CD4-positive, alpha-beta T cell (primary cell): ENCODE measurements at regions of chr6 and their contacts with region 1.

Region 1: DNA sequence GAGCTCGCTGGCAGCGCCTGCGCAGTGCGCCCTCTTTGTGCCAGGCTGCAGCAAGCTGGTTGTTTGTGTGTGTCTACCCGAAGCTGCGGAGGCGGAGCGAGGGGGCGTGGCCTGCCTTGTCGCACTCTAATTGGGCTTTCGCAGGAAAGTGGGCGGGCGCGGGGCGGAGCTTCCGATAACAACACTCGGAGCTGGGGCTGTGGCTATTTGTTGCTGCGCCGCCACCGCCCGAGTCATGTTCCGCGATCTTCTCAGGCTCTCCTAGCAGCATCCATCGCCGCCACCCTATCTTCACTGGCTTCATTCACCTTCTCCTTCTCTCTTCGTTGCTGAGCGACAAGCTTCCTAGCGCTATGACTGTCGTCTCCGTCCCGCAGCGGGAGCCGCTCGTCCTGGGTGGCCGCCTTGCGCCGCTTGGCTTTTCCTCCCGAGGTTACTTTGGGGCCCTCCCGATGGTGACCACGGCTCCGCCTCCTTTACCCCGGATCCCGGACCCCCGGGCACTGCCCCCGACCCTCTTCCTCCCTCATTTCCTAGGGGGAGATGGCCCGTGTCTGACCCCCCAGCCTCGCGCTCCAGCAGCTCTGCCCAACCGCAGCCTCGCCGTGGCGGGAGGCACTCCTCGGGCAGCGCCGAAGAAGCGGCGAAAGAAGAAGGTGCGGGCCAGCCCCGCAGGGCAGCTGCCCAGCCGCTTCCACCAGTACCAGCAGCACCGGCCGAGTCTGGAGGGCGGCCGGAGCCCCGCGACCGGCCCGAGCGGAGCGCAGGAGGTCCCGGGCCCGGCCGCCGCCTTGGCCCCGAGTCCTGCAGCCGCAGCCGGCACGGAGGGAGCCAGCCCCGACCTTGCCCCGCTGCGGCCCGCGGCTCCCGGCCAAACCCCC is at the start of gene PNRC1:
- DNase-seq: peak; percentile 100
- ATAC-seq: peak; percentile 72
- H3K4me3 ChIP-seq: peak within 1 kb of the TSS; percentile 96
- H3K4me3 Mint-ChIP-seq: peak within 1 kb of the TSS; percentile 95
- H3K27ac ChIP-seq: peak within 1 kb of the TSS; percentile 99 to 100
- H3K27ac Mint-ChIP-seq: peak within 1 kb of the TSS; percentile 97
- H3K4me1 ChIP-seq: peaks cover 31% of the 10 kb centered on the region
- H3K4me1 Mint-ChIP-seq: peaks cover 46% of the 10 kb centered on the region
- H3K27me3 ChIP-seq: no peaks in the 10 kb centered on the region
- H3K27me3 Mint-ChIP-seq: peaks cover 5% of the 10 kb centered on the region
- CTCF ChIP-seq: no peak
- total RNA-seq, gene PNRC1: 974 to 1,023 TPM

Region 2: DNA sequence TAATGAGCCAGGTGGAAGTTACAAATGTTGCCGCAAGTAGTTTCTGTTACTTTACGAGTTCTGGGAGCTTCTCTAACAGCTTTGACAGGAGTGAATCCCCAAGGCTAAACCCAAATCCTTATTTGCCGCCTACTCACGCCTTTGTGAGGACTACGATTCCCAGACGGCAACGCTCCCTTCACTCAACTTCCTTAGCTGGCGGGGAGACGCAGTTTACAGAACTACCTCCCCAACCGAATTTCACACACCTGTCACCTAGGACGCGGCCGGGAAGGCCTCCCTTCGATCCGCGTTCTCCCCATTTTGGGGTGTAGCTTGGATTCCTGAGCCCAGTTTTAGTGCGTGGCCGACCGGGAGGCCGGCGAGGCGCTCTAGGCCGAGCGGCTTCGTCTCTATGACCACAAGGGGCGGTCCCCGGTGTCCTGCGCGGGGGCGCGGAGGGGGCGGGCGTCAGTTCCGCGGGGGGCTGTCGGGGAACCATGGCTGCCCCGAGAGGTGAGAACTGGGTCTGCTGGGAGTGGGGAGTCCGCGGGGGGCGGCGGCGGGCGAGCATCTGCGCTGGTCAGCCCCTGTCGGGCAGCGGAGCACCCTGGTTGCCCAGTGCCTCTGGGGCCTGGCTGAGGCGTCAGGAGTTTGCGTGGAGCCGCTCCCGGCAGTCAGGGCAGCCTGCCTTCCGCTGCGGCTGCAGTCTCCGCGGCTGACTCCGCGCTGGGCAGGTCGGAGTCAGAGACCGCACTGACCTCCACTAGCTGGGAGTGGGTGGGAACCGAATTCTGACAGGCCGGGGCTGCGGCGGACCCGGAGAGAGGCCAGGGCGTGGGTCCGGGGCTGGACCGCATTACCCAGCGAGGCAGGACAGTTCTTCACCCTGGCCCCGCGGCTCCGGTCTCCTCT is 1608.0 kb before region 1 on chr6 and contains the start of gene SLC35A1:
- CTCF ChIA-PET with region 1: no interaction called
- POLR2A ChIA-PET with region 1: no interaction called
- intact Hi-C with region 1: loop called in 1 of 2 experiments (anchors 5 kb)
- DNase-seq: peak; percentile 74 to 90 (median 80)
- ATAC-seq: peak; percentile 89
- H3K4me3 ChIP-seq: peak within 1 kb of the TSS; percentile 92
- H3K4me3 Mint-ChIP-seq: peak within 1 kb of the TSS; percentile 92
- H3K27ac ChIP-seq: peak within 1 kb of the TSS; percentile 77 to 97
- H3K27ac Mint-ChIP-seq: peak within 1 kb of the TSS; percentile 93
- H3K4me1 ChIP-seq: peaks cover 13% of the 10 kb centered on the region
- H3K4me1 Mint-ChIP-seq: peaks cover 28% of the 10 kb centered on the region
- H3K27me3 ChIP-seq: no peaks in the 10 kb centered on the region
- H3K27me3 Mint-ChIP-seq: peaks cover 3% of the 10 kb centered on the region
- CTCF ChIP-seq: no peak
- total RNA-seq, gene SLC35A1: 3.8 to 4.9 TPM

Region 3: GRCh38 chr6:88472851-88473525 is 607.8 kb before region 1 on chr6:
- CTCF ChIA-PET with region 1: no interaction called
- POLR2A ChIA-PET with region 1: no interaction called
- intact Hi-C with region 1: no loop called
- DNase-seq: no peak
- ATAC-seq: no peak
- H3K4me3 ChIP-seq: no peak overlapping the region
- H3K4me3 Mint-ChIP-seq: no peak overlapping the region
- H3K27ac ChIP-seq: no peak overlapping the region
- H3K27ac Mint-ChIP-seq: no peak overlapping the region
- H3K4me1 ChIP-seq: no peaks in the 10 kb centered on the region
- H3K4me1 Mint-ChIP-seq: no peaks in the 10 kb centered on the region
- H3K27me3 ChIP-seq: no peaks in the 10 kb centered on the region
- H3K27me3 Mint-ChIP-seq: peaks cover 15% of the 10 kb centered on the region
- CTCF ChIP-seq: no peak

Region 4: GRCh38 chr6:88982720-88983119 is 98.1 kb before region 1 on chr6:
- CTCF ChIA-PET with region 1: interaction called, 9 read pairs
- POLR2A ChIA-PET with region 1: interaction called, 71 read pairs
- intact Hi-C with region 1: loop called in 1 of 2 experiments (anchors 5 kb)
- DNase-seq: peak in 4 of 14 experiments; percentile 24 to 79 (median 75)
- ATAC-seq: peak; percentile 89
- H3K4me3 ChIP-seq: no peak overlapping the region
- H3K4me3 Mint-ChIP-seq: no peak overlapping the region
- H3K27ac ChIP-seq: no peak overlapping the region
- H3K27ac Mint-ChIP-seq: no peak overlapping the region
- H3K4me1 ChIP-seq: no peaks in the 10 kb centered on the region
- H3K4me1 Mint-ChIP-seq: no peaks in the 10 kb centered on the region
- H3K27me3 ChIP-seq: no peaks in the 10 kb centered on the region
- H3K27me3 Mint-ChIP-seq: no peaks in the 10 kb centered on the region
- CTCF ChIP-seq: peak; percentile 82

Region 5: DNA sequence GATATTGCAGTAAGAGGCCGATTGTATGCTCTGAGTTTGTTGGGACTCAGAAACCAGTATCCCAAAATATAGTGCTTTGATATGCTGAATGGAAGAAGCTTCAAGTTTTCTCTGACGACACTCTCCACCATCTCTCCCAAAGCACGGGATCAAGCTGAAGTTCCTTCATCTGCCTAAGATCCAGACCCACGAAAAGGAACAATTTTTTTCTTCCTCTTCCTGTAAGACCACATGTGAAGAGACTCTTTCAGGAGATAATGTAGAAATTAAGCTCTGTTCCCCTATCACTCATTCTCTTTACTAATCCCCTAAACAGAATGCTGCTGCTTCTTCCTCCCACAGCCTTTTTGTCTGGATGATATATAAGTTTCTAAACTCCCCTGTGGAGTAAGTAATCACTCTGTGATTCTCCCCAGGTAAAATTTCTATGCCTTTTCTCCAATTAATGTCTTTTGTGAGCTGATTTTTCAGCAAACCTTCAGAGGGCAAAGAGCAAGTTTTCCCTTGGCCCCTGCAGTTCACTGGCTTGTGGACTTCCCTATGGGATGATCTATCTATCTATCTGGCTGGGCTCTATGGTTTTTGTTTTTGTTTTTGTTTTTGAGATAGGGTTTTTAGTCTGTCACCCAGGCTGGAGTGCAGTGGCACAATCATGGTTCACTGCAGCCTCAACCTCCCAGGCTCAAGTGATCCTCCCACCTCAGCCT is 13.7 kb before region 1 on chr6:
- CTCF ChIA-PET with region 1: interaction called, 3 read pairs
- POLR2A ChIA-PET with region 1: interaction called, 24 read pairs
- intact Hi-C with region 1: no loop called
- DNase-seq: no peak
- ATAC-seq: no peak
- H3K4me3 ChIP-seq: no peak overlapping the region
- H3K4me3 Mint-ChIP-seq: no peak overlapping the region
- H3K27ac ChIP-seq: no peak overlapping the region
- H3K27ac Mint-ChIP-seq: no peak overlapping the region
- H3K4me1 ChIP-seq: no peaks in the 10 kb centered on the region
- H3K4me1 Mint-ChIP-seq: no peaks in the 10 kb centered on the region
- H3K27me3 ChIP-seq: no peaks in the 10 kb centered on the region
- H3K27me3 Mint-ChIP-seq: no peaks in the 10 kb centered on the region
- CTCF ChIP-seq: no peak

Region 6: DNA sequence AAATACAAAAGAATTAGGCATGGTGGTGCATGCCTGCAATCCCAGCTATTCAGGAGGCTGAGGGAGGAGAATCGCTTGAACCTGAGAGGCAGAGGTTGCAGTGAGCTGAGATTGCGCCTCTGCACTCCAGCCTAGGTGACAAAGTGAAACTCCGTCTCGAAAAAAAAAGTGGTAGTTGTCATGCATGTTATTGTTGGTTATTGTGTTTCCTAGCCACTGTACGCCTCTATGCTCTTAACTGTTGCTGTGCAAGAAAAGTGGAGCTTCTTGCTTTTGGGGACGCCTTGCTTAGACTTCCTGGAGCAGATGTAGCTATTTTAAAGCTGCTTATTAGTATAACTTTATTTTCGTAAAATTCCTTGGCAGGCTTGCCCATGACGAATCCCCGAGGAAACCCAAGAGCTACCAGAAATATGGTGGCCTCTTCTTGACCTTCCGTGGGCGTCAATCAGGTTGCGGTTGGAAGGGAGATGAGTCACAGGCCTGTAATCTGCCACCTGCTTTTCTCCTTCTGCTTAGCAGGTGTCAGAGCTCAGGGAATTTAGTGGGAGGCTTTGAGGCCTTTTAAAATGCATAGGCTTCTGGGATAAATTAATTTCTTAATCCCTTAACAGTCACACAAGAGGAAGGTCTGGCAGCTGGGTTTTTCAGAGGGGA is 217.0 kb after region 1 on chr6:
- CTCF ChIA-PET with region 1: interaction called, 3 read pairs
- POLR2A ChIA-PET with region 1: interaction called, 32 read pairs
- intact Hi-C with region 1: loop called in 1 of 2 experiments (anchors 2 kb)
- DNase-seq: peak in 13 of 14 experiments; percentile 36 to 85 (median 46)
- ATAC-seq: peak; percentile 69
- H3K4me3 ChIP-seq: no peak overlapping the region
- H3K4me3 Mint-ChIP-seq: peak overlapping the region; percentile 50
- H3K27ac ChIP-seq: peak overlapping the region in 1 of 2 donors; percentile 64
- H3K27ac Mint-ChIP-seq: peak overlapping the region; percentile 86
- H3K4me1 ChIP-seq: peaks cover 28% of the 10 kb centered on the region
- H3K4me1 Mint-ChIP-seq: peaks cover 26% of the 10 kb centered on the region
- H3K27me3 ChIP-seq: no peaks in the 10 kb centered on the region
- H3K27me3 Mint-ChIP-seq: no peaks in the 10 kb centered on the region
- CTCF ChIP-seq: no peak

Region 7: DNA sequence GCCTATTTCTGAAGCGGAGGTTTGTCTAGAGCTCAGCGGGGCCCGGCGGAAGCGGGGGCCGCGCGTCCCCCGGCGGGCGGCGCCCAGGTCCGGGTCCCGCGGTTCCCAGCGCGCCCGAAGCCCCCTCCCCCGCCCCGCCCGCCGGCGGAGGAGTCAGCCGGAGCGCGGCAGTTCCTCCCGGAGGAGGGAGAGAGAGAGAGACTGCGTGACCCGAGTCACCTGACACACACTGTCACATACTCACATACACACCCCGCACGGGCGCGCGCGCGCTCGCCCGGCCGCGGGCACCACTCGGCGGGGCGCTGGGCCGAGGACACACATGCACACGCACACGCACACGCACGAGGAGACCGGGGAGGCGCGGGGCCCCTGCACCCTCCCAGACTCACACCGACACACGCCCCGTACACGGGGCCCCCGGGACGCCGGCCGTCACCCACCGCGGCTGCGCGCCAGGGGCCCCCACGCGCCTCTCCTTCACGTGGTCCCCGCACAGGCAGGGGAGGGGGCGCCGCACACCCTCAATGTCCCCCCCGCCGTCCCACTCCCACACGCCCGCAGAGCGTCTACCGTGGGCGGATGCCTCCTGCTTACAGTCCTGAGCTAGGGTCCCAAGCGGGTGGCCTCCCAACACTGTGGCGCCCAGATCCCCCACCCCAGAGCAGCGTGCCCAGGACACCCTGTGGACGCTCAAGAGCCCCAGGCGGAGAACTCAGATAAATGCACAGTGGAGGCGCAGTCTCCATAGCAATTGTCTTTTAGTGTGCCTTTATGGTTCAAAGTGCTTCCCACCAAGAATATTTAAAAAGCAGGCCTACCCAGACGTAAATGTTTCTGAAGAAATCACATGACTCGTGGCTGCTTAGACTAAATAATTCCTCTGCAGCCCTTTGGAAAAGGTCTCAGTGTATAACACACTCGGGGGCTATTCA is 331.6 kb after region 1 on chr6 and contains the start of gene RRAGD:
- CTCF ChIA-PET with region 1: no interaction called
- POLR2A ChIA-PET with region 1: interaction called, 18 read pairs
- intact Hi-C with region 1: no loop called
- DNase-seq: peak in 13 of 14 experiments; percentile 29 to 85 (median 58)
- ATAC-seq: peak; percentile 79
- H3K4me3 ChIP-seq: peak within 1 kb of the TSS; percentile 72
- H3K4me3 Mint-ChIP-seq: peak within 1 kb of the TSS; percentile 100
- H3K27ac ChIP-seq: no peak within 1 kb of the TSS
- H3K27ac Mint-ChIP-seq: peak within 1 kb of the TSS; percentile 78
- H3K4me1 ChIP-seq: peaks cover 20% of the 10 kb centered on the region
- H3K4me1 Mint-ChIP-seq: peaks cover 14% of the 10 kb centered on the region
- H3K27me3 ChIP-seq: peaks cover 0 to 4% of the 10 kb centered on the region in 2 experiments
- H3K27me3 Mint-ChIP-seq: peaks cover 15% of the 10 kb centered on the region
- CTCF ChIP-seq: no peak
- total RNA-seq, gene RRAGD: 9.0 to 10.2 TPM

Region 8: GRCh38 chr6:89527634-89528033 is 446.9 kb after region 1 on chr6:
- CTCF ChIA-PET with region 1: no interaction called
- POLR2A ChIA-PET with region 1: no interaction called
- intact Hi-C with region 1: no loop called
- DNase-seq: peak in 3 of 14 experiments; percentile 7 to 34 (median 22)
- ATAC-seq: peak; percentile 24
- H3K4me3 ChIP-seq: no peak overlapping the region
- H3K4me3 Mint-ChIP-seq: no peak overlapping the region
- H3K27ac ChIP-seq: no peak overlapping the region
- H3K27ac Mint-ChIP-seq: no peak overlapping the region
- H3K4me1 ChIP-seq: peaks cover 4% of the 10 kb centered on the region
- H3K4me1 Mint-ChIP-seq: no peaks in the 10 kb centered on the region
- H3K27me3 ChIP-seq: no peaks in the 10 kb centered on the region
- H3K27me3 Mint-ChIP-seq: no peaks in the 10 kb centered on the region
- CTCF ChIP-seq: no peak

Region 9: DNA sequence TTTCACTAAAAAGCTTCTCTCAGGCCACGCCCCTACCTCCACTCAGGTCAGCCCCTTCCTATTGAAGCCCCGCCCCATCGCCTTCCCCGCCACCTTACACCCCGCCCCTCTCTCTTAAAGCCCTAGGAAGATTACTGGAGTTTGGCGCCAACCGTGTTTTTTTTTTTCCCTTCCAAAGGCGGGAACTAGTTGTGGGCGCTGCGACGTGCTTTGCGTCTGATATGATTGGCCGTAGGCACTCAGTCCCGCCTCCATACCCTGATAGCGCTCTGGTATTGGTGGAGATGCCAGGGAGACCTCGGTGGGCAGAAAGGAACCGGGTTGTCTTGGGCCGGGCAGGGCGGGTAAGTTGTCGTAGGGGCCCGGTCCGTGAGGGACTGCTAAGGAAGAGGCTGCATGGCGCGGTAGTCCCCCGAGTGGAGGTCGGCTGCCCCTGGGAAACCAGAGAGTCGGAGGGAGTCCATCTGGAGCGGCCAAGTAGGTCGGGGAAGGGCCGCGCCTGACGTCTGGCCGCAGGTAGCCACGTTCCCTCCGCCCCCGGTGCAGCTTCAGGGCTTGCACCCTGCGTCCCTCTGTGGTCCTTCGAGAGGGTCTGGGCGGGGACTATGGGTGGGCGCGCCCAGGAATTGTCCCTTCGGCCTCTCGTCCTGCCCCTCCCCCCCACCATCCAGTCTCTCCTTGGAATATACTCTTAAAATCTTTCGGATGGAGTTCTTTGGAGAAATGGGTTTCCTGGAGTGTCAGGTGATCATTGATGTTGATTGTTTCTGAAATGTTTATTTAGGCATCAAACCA is 749.0 kb after region 1 on chr6 and contains the start of gene CASP8AP2:
- CTCF ChIA-PET with region 1: no interaction called
- POLR2A ChIA-PET with region 1: interaction called, 16 read pairs
- intact Hi-C with region 1: loop called in 1 of 2 experiments (anchors 10 kb)
- DNase-seq: peak; percentile 86 to 99 (median 92)
- ATAC-seq: peak; percentile 93
- H3K4me3 ChIP-seq: peak within 1 kb of the TSS; percentile 100
- H3K4me3 Mint-ChIP-seq: peak within 1 kb of the TSS; percentile 94
- H3K27ac ChIP-seq: peak within 1 kb of the TSS; percentile 68 to 86
- H3K27ac Mint-ChIP-seq: peak within 1 kb of the TSS; percentile 91
- H3K4me1 ChIP-seq: peaks cover 33% of the 10 kb centered on the region
- H3K4me1 Mint-ChIP-seq: peaks cover 35% of the 10 kb centered on the region
- H3K27me3 ChIP-seq: no peaks in the 10 kb centered on the region
- H3K27me3 Mint-ChIP-seq: no peaks in the 10 kb centered on the region
- CTCF ChIP-seq: no peak
- total RNA-seq, gene CASP8AP2: 17.3 to 20.0 TPM